ENCODE measurements at regions of chr1 and their contacts with region 1.

Region 1: GRCh38 chr1:229258031-229258756 is 12.7 kb upstream of the RAB4A start:
- DNase-seq: peak; percentile 60
- ATAC-seq: peak; percentile 81
- H3K4me3 ChIP-seq: no peak overlapping the region
- H3K27ac ChIP-seq: no peak overlapping the region
- H3K4me1 ChIP-seq: peaks cover 12 to 14% of the 10 kb centered on the region in 2 experiments
- H3K27me3 ChIP-seq: no peaks in the 10 kb centered on the region
- CTCF ChIP-seq: peak; percentile 69 to 89 (median 84)
- POLR2A ChIP-seq: no peak
- RAD21 ChIP-seq: peak; percentile 96

Region 2: GRCh38 chr1:228664399-228664914 is 593.7 kb before region 1 on chr1:
- CTCF ChIA-PET with region 1: interaction called, 38 read pairs
- POLR2A ChIA-PET with region 1: interaction called, 4 read pairs
- RAD21 ChIA-PET with region 1: interaction called, 5 to 12 read pairs
- intact Hi-C with region 1: loop called (anchors 1 kb)
- DNase-seq: peak; percentile 85
- ATAC-seq: peak; percentile 75
- H3K4me3 ChIP-seq: peak overlapping the region; percentile 37 to 55
- H3K27ac ChIP-seq: peak overlapping the region; percentile 76; the same call in 1 of the 2 replicates
- H3K4me1 ChIP-seq: peaks cover 6 to 17% of the 10 kb centered on the region in 2 experiments; a peak in 3 of 4 replicates
- H3K27me3 ChIP-seq: no peaks in the 10 kb centered on the region
- CTCF ChIP-seq: peak; percentile 70 to 91 (median 79)
- POLR2A ChIP-seq: no peak
- RAD21 ChIP-seq: peak; percentile 98

Region 3: GRCh38 chr1:228734881-228735801 is 523.1 kb before region 1 on chr1 and contains the start of gene RHOU:
- CTCF ChIA-PET with region 1: interaction called, 10 read pairs
- POLR2A ChIA-PET with region 1: no interaction called
- RAD21 ChIA-PET with region 1: no interaction called
- intact Hi-C with region 1: loop called (anchors 10 kb)
- DNase-seq: peak; percentile 12
- ATAC-seq: peak; percentile 90
- H3K4me3 ChIP-seq: peak within 1 kb of the TSS; percentile 53 to 62
- H3K27ac ChIP-seq: peak within 1 kb of the TSS; percentile 45; the same call in 1 of the 2 replicates
- H3K4me1 ChIP-seq: peaks cover 13 to 16% of the 10 kb centered on the region in 2 experiments; a peak in 3 of 4 replicates
- H3K27me3 ChIP-seq: no peaks in the 10 kb centered on the region
- CTCF ChIP-seq: peak in 2 of 3 experiments; percentile 8 to 30; a peak in 2 of 6 replicates
- POLR2A ChIP-seq: no peak
- RAD21 ChIP-seq: peak; percentile 39
- total RNA-seq, gene RHOU: 4.0 TPM

Region 4: GRCh38 chr1:229452956-229453801 is 195.0 kb after region 1 on chr1:
- CTCF ChIA-PET with region 1: interaction called, 3 read pairs
- POLR2A ChIA-PET with region 1: no interaction called
- RAD21 ChIA-PET with region 1: no interaction called
- intact Hi-C with region 1: loop called (anchors 10 kb)
- DNase-seq: peak; percentile 4
- ATAC-seq: peak; percentile 69
- H3K4me3 ChIP-seq: no peak overlapping the region
- H3K27ac ChIP-seq: no peak overlapping the region
- H3K4me1 ChIP-seq: no peaks in the 10 kb centered on the region
- H3K27me3 ChIP-seq: no peaks in the 10 kb centered on the region
- CTCF ChIP-seq: peak; percentile 47 to 62 (median 61); a peak in 5 of 6 replicates
- POLR2A ChIP-seq: no peak
- RAD21 ChIP-seq: peak; percentile 71

Region 5: DNA sequence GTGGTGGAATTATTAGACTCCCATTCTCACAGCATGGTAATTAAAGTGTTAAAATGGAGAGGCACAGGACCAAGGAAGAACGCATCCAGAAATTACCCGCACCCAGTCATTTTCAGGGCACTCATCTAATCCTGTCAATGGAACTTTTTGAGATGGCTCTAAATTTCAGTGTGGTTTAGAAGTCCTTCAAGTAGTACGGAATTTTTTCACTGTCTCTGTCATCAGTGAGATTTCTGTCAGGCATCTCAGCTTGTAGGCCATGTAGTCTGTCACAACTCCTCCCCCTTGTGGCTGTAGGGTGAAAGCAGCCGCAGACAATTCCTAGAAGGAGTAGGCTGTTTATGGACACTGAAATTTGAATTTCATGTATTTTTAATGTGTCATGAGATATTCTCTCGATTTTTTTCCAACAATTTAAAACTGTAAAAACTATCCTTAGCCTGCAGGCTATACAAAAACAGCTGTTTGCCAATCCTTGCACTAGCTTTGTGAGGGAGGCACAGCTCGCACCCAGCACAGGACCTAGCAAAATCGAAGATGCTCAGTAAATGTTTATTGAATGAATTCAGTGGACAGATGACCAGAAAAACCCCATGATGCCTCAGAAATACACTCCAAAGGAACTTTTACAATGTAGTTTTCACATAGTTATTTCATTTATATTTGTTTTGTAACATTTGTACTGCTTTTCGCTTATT is 256.5 kb after region 1 on chr1:
- CTCF ChIA-PET with region 1: interaction called, 10 read pairs
- POLR2A ChIA-PET with region 1: no interaction called
- RAD21 ChIA-PET with region 1: interaction called in 1 of 2 experiments, 4 read pairs
- intact Hi-C with region 1: loop called (anchors 1 kb)
- DNase-seq: peak; percentile 45
- ATAC-seq: peak; percentile 97
- H3K4me3 ChIP-seq: no peak overlapping the region
- H3K27ac ChIP-seq: no peak overlapping the region
- H3K4me1 ChIP-seq: no peaks in the 10 kb centered on the region
- H3K27me3 ChIP-seq: no peaks in the 10 kb centered on the region
- CTCF ChIP-seq: peak; percentile 66 to 87 (median 83)
- POLR2A ChIP-seq: no peak
- RAD21 ChIP-seq: peak; percentile 70

Region 6: GRCh38 chr1:230310381-230311163 is 1052.4 kb after region 1 on chr1:
- CTCF ChIA-PET with region 1: no interaction called
- POLR2A ChIA-PET with region 1: no interaction called
- RAD21 ChIA-PET with region 1: no interaction called
- intact Hi-C with region 1: loop called (anchors 1 kb)
- DNase-seq: peak; percentile 60
- ATAC-seq: peak; percentile 93
- H3K4me3 ChIP-seq: no peak overlapping the region
- H3K27ac ChIP-seq: no peak overlapping the region
- H3K4me1 ChIP-seq: peaks cover 3 to 15% of the 10 kb centered on the region in 2 experiments; a peak in 3 of 4 replicates
- H3K27me3 ChIP-seq: 0 out of 2 replicates have a peak, but pooled peaks cover 7% of the 10 kb centered on the region
- CTCF ChIP-seq: peak; percentile 82 to 88 (median 88)
- POLR2A ChIP-seq: no peak
- RAD21 ChIP-seq: peak; percentile 98

Measured in HCT116 (cell line).